ENCODE measurements at regions of chrX and their contacts with region 1.

Region 1: DNA sequence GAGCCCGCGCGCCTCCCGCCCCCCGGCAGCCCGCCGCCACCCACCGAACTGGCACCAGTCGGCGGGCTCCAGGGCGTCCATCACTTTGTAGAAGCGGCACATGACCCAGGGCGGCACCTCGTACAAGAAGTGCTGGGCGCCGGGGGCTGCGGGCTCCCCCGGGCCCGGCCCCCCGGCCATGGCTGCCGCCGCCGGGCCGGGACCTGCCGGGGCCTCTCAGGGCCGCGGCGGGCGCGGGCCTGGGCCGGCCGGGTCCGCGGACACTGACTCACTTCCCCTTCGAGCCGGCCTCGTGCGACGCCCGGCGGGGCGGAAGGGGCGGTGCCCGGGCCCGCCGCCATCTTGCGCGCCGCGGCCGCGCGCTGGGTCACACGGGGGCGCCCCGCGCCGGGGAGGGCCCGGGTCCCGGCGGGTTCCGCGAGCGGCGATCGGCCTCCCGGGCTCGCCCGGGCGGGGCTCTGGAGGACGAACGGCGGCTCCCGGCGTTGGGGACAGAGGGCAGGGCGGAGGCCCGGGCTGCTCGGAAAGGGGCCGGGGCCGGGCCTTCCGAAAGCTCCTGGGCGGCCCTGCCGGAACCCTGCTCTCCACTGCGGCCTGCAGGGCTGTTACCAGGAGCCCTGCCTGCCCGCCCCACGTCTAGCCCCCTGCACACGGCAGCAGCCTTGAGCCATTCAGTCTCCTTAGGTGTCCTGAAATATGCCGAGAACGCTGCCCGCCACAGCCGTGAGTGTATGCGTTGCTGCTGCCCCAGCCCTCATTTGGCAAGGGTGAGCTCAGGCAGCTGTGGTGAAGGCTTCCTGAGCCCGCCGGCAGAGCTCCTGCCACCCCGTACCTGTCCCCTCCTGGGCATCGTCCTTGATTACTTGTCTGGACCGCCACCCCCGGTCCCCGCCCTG is at the start of gene IRAK1:
- DNase-seq: peak; percentile 65
- H3K4me3 Mint-ChIP-seq: peak within 1 kb of the TSS; percentile 89
- H3K27ac Mint-ChIP-seq: peak within 1 kb of the TSS; percentile 94
- H3K4me1 Mint-ChIP-seq: peaks cover 19% of the 10 kb centered on the region
- H3K27me3 Mint-ChIP-seq: no peaks in the 10 kb centered on the region
- total RNA-seq, gene IRAK1: 118 to 122 TPM

Region 2: GRCh38 chrX:153981771-153982533 is 37.9 kb before region 1 on chrX:
- CTCF ChIA-PET with region 1: interaction called, 3 read pairs
- POLR2A ChIA-PET with region 1: interaction called, 26 read pairs
- DNase-seq: peak; percentile 83
- H3K4me3 Mint-ChIP-seq: peak overlapping the region; percentile 69
- H3K27ac Mint-ChIP-seq: peak overlapping the region; percentile 93
- H3K4me1 Mint-ChIP-seq: peaks cover 57% of the 10 kb centered on the region
- H3K27me3 Mint-ChIP-seq: no peaks in the 10 kb centered on the region

Region 3: DNA sequence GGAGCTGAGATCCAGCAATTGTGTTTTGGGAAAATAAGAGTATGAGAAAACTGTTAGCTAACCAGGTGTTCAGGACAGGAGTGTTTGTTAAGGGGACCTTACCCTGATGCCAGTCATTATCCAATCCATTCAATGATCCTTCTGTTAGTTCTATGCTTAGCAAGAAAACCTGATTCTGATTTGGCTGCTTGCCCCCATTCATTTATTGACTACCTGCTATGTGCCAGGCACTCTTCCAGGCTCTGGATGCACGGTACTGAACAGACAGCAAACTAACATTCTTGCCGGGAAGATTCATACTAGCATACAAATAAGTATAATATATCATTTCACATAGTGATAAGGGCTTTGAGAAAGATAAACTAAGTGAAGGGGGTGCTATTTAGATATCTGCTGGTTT is 78.7 kb after region 1 on chrX:
- CTCF ChIA-PET with region 1: no interaction called
- POLR2A ChIA-PET with region 1: no interaction called
- DNase-seq: no peak
- H3K4me3 Mint-ChIP-seq: peak overlapping the region; percentile 78
- H3K27ac Mint-ChIP-seq: peak overlapping the region; percentile 76
- H3K4me1 Mint-ChIP-seq: peaks cover 50% of the 10 kb centered on the region
- H3K27me3 Mint-ChIP-seq: peaks cover 2% of the 10 kb centered on the region

Measured in activated CD4-positive, alpha-beta memory T cell treated with anti-CD3 and anti-CD28 coated beads, Interleukin-2, amount 10 ng/mL, durations not matched to agents 7 days and 5 days (primary cell).